A673 (cell line): ENCODE measurements at regions of chr6 and their contacts with region 1.

Region 1: DNA sequence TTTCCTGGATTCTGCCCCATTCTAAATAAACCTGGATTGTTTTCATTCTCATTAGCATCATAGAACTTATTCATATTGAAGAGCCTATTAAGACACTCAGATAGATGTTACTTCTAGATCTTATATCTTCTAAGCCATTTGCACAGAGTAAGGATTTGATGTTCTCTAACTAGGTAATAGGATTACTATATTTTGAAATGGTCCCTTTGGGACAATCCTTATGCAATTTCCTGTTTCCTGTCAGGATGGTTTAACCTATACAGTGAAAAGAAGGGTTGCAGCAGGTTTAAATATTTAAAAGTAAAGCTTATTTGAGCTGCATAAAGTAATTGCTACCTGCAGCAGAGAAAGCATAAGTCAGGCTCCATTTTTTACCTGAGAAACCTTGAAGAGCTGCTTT is 860.1 kb downstream of the TFAP2A start:
- DNase-seq: peak; percentile 96
- H3K4me3 ChIP-seq: no peak overlapping the region
- H3K27ac ChIP-seq: no peak overlapping the region
- H3K4me1 ChIP-seq: peaks cover 22% of the 10 kb centered on the region
- H3K27me3 ChIP-seq: peaks cover 26% of the 10 kb centered on the region
- CTCF ChIP-seq: no peak

Region 2: GRCh38 chr6:9795880-9796279 is 241.1 kb after region 1 on chr6:
- CTCF ChIA-PET with region 1: no interaction called
- POLR2A ChIA-PET with region 1: no interaction called
- intact Hi-C with region 1: loop called (anchors 5 kb)
- DNase-seq: peak; percentile 97
- H3K4me3 ChIP-seq: no peak overlapping the region
- H3K27ac ChIP-seq: peak overlapping the region; percentile 29
- H3K4me1 ChIP-seq: peaks cover 18% of the 10 kb centered on the region
- H3K27me3 ChIP-seq: no peaks in the 10 kb centered on the region
- CTCF ChIP-seq: no peak